Body of pancreas (tissue), 4 donors: ENCODE measurements at regions of chr10 and their contacts with region 1.

Region 1: DNA sequence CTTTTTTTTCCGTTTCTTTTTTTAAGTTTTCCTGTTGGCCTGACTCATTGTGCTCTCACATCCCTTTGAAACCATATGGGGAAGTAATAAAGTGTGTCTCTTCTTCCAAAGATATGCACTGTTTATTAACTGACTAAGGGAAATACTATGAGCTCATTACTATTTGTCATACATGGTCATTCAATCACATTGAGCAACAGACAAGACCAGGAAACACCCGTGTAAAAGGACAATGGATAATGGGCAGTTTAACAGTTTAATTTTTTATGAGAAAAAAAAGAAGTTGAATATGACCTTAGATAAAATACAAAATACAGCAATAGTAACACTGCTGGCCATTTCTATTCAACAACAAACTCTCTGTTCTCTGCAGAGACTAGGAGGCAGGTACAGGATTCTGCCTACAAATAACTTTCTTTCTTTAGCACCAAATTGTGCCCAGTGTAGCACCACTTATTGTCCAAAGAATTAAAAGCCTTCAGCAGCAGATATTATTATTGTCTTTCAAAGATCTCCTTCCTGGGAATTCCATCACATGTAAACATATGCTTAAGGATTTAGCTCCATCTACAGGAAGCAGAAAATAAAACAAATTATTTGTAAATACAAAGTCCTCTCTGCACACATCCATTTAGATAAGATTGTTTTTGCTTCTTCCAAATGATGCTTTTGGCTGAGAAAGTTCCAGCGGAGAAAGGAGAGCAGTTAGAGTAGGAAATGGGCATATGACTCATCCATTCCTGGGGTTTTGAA is 55.0 kb upstream of the AKR1E2 start:
- DNase-seq: no peak
- ATAC-seq: peak; percentile 81
- H3K4me3 ChIP-seq: no peak overlapping the region
- H3K27ac ChIP-seq: peak overlapping the region in 2 of 4 donors; percentile 2 to 78
- H3K4me1 ChIP-seq: no peaks in the 10 kb centered on the region
- H3K27me3 ChIP-seq: no peaks in the 10 kb centered on the region
- CTCF ChIP-seq: peak in 6 of 7 experiments; percentile 17 to 45 (median 34)
- POLR2A ChIP-seq: no peak

Region 2: GRCh38 chr10:4512671-4513240 is 258.2 kb before region 1 on chr10:
- intact Hi-C with region 1: loop called (anchors 10 kb)
- DNase-seq: peak in 3 of 4 donors; percentile 27 to 40 (median 37)
- ATAC-seq: no peak
- H3K4me3 ChIP-seq: no peak overlapping the region
- H3K27ac ChIP-seq: no peak overlapping the region
- H3K4me1 ChIP-seq: no peaks in the 10 kb centered on the region
- H3K27me3 ChIP-seq: no peaks in the 10 kb centered on the region
- CTCF ChIP-seq: peak in 5 of 7 experiments; percentile 24 to 47 (median 36)
- POLR2A ChIP-seq: no peak